ENCODE measurements at regions of chr10 and their contacts with region 1.

Region 1: GRCh38 chr10:67697724-67698131 is 1.7 kb upstream of the CTNNA3 start:
- DNase-seq: no peak
- H3K4me3 ChIP-seq: no peak overlapping the region
- CTCF ChIP-seq: no peak
- POLR2A ChIP-seq: no peak

Region 2: DNA sequence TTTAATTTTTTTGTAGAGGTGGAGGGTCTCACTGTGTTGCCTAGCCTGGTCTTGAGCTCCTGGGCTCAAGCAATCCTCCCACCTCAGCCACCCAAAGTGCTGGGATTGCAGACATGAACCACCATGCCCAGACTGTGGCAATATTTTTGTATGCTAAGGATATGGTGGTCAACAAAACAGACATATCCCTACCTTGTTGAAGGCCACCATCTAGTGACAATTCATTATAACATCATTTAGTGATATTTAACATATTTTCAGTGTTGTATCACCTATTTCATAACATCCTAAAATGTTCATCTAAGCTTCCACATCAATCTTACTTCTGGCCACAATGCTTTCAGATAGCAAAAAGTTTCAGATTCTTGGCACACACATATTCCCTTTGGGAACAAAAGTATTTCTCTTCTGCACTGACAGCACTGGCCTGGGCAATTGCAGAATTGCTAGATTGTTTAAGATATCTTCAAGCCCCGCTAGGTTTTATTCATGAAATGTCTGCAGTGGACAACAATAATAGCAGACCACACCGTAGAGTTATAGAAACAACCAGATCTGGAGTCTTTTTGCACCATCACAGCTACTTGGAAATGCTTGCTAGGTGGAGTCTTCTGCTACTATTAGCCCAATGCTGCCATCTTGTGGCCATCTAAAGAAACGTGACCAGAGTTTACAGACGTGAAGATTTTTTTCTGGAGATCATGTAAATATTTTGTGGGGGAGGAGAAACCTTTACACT is 81.9 kb after region 1 on chr10:
- intact Hi-C with region 1: loop called (anchors 5 kb)
- DNase-seq: peak in 1 of 2 donors; percentile 67
- H3K4me3 ChIP-seq: no peak overlapping the region
- CTCF ChIP-seq: peak in 1 of 3 donors; percentile 27
- POLR2A ChIP-seq: no peak